PC-3 (cell line): ENCODE measurements at regions of chr19 and their contacts with region 1.

Region 1: GRCh38 chr19:18557474-18558201 is at the start of gene KXD1:
- DNase-seq: peak; percentile 99
- ATAC-seq: peak; percentile 99
- H3K4me3 ChIP-seq: peak within 1 kb of the TSS; percentile 82
- H3K27ac ChIP-seq: peak within 1 kb of the TSS; percentile 29
- H3K4me1 ChIP-seq: peaks cover 12% of the 10 kb centered on the region; the same call in 1 of the 2 replicates
- H3K27me3 ChIP-seq: no peaks in the 10 kb centered on the region
- CTCF ChIP-seq: no peak
- total RNA-seq, gene KXD1: 137 and 162 TPM in 2 replicates

Region 2: DNA sequence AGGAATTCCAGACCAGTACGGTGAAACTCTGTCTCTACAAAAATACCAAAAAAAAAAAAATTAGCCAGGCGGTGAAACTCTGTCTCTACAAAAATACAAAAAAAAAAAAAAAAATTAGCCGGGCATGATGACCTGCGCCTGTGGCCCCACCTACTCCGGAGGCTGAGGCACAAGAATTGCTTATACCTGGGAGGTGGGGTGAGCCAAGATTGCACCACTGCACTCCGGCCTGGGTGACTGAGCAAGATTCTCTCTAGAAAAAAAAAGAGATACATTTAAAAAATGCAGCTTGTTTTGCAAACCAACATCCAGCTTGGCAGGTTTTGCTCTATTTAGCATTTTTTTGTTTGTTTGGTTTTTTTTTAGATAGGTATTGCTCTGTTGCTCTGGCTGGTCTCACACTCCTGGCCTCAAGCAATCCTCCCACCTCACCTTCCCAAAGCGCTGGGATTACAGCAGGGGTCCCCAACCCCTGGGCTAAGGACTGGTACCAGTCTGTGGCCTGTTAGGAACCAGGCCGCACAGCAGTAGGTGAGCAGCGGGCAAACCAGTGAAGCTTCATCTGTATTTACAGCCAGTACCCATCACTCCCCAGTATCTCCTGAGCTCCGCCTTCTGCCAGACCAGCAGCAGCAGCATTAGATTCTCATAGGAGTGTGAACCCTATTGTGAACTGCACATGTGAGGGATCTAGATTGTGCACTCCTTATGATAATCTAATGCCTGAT is 223.8 kb before region 1 on chr19:
- CTCF ChIA-PET with region 1: interaction called, 12 read pairs
- POLR2A ChIA-PET with region 1: no interaction called
- intact Hi-C with region 1: no loop called
- DNase-seq: no peak
- ATAC-seq: no peak
- H3K4me3 ChIP-seq: no peak overlapping the region
- H3K27ac ChIP-seq: no peak overlapping the region
- H3K4me1 ChIP-seq: no peaks in the 10 kb centered on the region; the same call in 1 of the 2 replicates
- H3K27me3 ChIP-seq: no peaks in the 10 kb centered on the region
- CTCF ChIP-seq: no peak

Region 3: GRCh38 chr19:18521885-18522624 is 35.6 kb before region 1 on chr19 and contains the start of gene ELL:
- CTCF ChIA-PET with region 1: interaction called, 3 read pairs
- POLR2A ChIA-PET with region 1: interaction called, 10 read pairs
- intact Hi-C with region 1: loop called (anchors 5 kb)
- DNase-seq: peak; percentile 100
- ATAC-seq: peak; percentile 85
- H3K4me3 ChIP-seq: peak within 1 kb of the TSS; percentile 100
- H3K27ac ChIP-seq: peak within 1 kb of the TSS; percentile 90
- H3K4me1 ChIP-seq: peaks cover 26% of the 10 kb centered on the region
- H3K27me3 ChIP-seq: no peaks in the 10 kb centered on the region
- CTCF ChIP-seq: no peak
- total RNA-seq, gene ELL: 21.0 and 30.6 TPM in 2 replicates

Region 4: GRCh38 chr19:18543816-18544475 is 13.7 kb before region 1 on chr19:
- CTCF ChIA-PET with region 1: no interaction called
- POLR2A ChIA-PET with region 1: no interaction called
- intact Hi-C with region 1: no loop called
- DNase-seq: peak; percentile 87
- ATAC-seq: peak; percentile 83
- H3K4me3 ChIP-seq: peak overlapping the region; percentile 70
- H3K27ac ChIP-seq: no peak overlapping the region
- H3K4me1 ChIP-seq: peaks cover 13% of the 10 kb centered on the region; the same call in 1 of the 2 replicates
- H3K27me3 ChIP-seq: no peaks in the 10 kb centered on the region
- CTCF ChIP-seq: 0 out of 2 replicates have a peak, but pooled peaks have one; percentile 13

Region 5: GRCh38 chr19:18571564-18572300 is 14.1 kb after region 1 on chr19 and contains the start of gene UBA52:
- CTCF ChIA-PET with region 1: no interaction called
- POLR2A ChIA-PET with region 1: interaction called, 4 read pairs
- intact Hi-C with region 1: loop called (anchors 2 kb)
- DNase-seq: peak; percentile 99
- ATAC-seq: peak; percentile 96
- H3K4me3 ChIP-seq: peak within 1 kb of the TSS; percentile 100
- H3K27ac ChIP-seq: peak within 1 kb of the TSS; percentile 63
- H3K4me1 ChIP-seq: peaks cover 15% of the 10 kb centered on the region
- H3K27me3 ChIP-seq: no peaks in the 10 kb centered on the region
- CTCF ChIP-seq: no peak
- total RNA-seq, gene UBA52: 871 and 1,108 TPM in 2 replicates

Region 6: GRCh38 chr19:18588611-18589379 is 31.2 kb after region 1 on chr19 and contains the start of gene REX1BD:
- CTCF ChIA-PET with region 1: interaction called, 3 read pairs
- POLR2A ChIA-PET with region 1: interaction called, 19 read pairs
- intact Hi-C with region 1: no loop called
- DNase-seq: peak; percentile 75
- ATAC-seq: peak; percentile 84
- H3K4me3 ChIP-seq: peak within 1 kb of the TSS; percentile 79
- H3K27ac ChIP-seq: peak within 1 kb of the TSS; percentile 88
- H3K4me1 ChIP-seq: peaks cover 22% of the 10 kb centered on the region
- H3K27me3 ChIP-seq: no peaks in the 10 kb centered on the region
- CTCF ChIP-seq: peak; percentile 87
- total RNA-seq, gene REX1BD: 121 and 207 TPM in 2 replicates

Region 7: DNA sequence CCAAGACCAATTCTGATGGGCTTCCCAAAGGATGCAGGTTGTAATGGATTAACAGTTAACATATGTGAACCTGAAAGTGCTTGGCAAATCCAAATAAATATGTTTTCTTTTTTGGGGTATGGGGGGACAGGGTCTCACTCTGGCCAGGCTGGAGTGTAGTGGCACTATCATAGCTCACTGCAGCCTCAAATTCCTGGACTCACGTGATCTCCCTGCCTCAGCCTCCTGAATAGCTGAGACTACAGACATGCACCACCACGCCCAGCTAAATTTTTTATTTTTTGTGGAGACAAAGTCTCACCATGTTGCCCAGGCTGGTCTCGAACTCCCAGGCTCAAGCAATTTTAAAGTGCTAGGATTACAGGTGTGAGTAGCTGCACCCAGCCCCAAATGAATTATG is 819.6 kb after region 1 on chr19:
- CTCF ChIA-PET with region 1: no interaction called
- POLR2A ChIA-PET with region 1: interaction called, 11 read pairs
- intact Hi-C with region 1: no loop called
- DNase-seq: no peak
- ATAC-seq: no peak
- H3K4me3 ChIP-seq: no peak overlapping the region
- H3K27ac ChIP-seq: peak overlapping the region; percentile 2; the same call in 1 of the 2 replicates
- H3K4me1 ChIP-seq: peaks cover 18% of the 10 kb centered on the region
- H3K27me3 ChIP-seq: no peaks in the 10 kb centered on the region
- CTCF ChIP-seq: no peak